GM12878 (cell line): ENCODE measurements at regions of chr20 and their contacts with region 1.

Region 1: DNA sequence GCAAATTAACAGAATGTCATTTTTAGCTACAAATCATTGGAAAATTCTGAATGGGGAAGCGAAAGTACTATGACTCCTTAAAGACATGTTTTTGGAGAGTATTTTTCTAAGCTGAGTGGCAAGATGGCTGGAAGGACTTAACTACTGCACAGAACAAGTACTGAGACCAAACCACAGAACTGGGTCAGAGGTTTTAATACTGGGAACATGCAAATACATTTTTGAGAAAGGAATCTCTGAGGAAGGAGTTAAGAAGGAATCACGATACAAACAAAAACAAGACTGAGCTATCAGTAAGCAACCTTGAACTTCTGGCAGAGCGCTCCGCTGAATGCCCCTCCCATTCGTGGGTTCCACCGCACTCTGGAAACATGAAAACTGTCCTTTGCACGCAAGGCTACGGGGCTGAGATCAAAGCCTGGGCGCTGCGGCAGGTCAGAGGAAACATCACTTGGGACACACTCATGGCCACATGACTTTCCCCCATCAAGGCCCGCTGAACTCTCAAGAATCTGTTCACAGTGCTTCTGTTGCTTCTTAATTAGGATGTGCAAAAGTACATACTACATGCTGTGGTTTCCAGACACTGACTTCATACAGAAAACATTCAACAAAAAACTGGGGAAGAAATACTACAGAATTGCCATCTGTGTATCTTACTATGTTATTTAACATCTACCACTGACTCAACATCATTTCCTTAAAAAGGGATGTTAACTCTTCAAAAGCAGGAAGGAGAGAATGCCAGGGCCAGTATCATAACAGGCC is 27.8 kb downstream of the SLC23A2 start:
- DNase-seq: peak; percentile 85
- ATAC-seq: peak; percentile 94
- H3K4me3 ChIP-seq: peak overlapping the region; percentile 42
- H3K27ac ChIP-seq: peak overlapping the region; percentile 76
- H3K4me1 ChIP-seq: peaks cover 4% of the 10 kb centered on the region
- H3K27me3 ChIP-seq: no peaks in the 10 kb centered on the region
- CTCF ChIP-seq: no peak
- EP300 ChIP-seq: peak; percentile 94 to 97
- POLR2A ChIP-seq: peak; percentile 45; the same call in 1 of the 2 replicates
- RAD21 ChIP-seq: 0 out of 2 replicates have a peak, but pooled peaks have one; percentile 12

Region 2: DNA sequence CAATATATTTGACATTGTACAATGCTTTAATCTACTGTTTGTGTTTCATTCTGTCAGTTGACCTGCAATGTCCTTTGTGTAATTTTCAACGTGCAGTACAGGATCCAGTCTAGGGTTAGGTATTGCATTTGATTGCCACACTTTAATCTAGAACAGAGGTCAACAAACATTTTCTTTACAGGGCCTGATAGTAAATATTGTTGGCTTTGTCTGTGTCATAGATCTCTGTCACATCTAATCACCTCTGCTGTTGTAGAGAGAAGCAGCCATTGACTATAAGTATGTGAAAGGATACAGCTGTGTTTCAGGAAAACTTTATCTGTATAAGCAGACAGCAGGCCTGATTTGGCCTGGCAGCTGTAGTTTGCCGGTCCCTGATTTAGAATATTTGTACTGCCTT is 1463.4 kb before region 1 on chr20:
- CTCF ChIA-PET with region 1: no interaction called
- POLR2A ChIA-PET with region 1: no interaction called
- RAD21 ChIA-PET with region 1: no interaction called
- SMC1A ChIA-PET with region 1: no interaction called
- in situ Hi-C with region 1: no loop called
- intact Hi-C with region 1: no loop called
- DNase-seq: no peak
- ATAC-seq: no peak
- H3K4me3 ChIP-seq: no peak overlapping the region
- H3K27ac ChIP-seq: no peak overlapping the region
- H3K4me1 ChIP-seq: no peaks in the 10 kb centered on the region
- H3K27me3 ChIP-seq: no peaks in the 10 kb centered on the region
- CTCF ChIP-seq: no peak
- EP300 ChIP-seq: no peak
- POLR2A ChIP-seq: no peak
- RAD21 ChIP-seq: no peak

Region 3: DNA sequence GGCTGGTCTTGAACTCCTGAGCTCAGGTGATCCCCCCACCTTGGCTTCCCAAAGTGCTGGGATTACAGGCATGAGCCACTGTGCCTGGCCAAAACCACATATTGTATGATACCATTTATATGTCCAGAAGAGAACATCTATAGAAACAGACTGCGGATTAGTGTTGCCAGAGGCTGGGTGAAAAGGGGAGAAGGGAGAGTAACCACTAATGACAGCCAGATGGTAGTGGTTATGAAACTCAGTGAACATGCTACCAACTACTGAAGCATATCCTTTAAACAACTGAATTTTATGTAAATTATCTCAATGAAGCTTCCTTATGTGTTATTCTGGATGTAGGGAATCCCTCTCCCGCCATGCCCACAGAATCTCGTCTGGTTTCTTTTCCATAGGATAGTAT is 12.1 kb after region 1 on chr20:
- CTCF ChIA-PET with region 1: interaction called, 6 read pairs
- POLR2A ChIA-PET with region 1: interaction called, 9 read pairs
- RAD21 ChIA-PET with region 1: interaction called, 22 read pairs
- SMC1A ChIA-PET with region 1: interaction called, 16 read pairs
- in situ Hi-C with region 1: no loop called
- intact Hi-C with region 1: loop called (anchors 2 kb)
- DNase-seq: peak; percentile 24
- ATAC-seq: peak; percentile 77
- H3K4me3 ChIP-seq: peak overlapping the region; percentile 13; the same call in 1 of the 2 replicates
- H3K27ac ChIP-seq: peak overlapping the region; percentile 11; the same call in 1 of the 2 replicates
- H3K4me1 ChIP-seq: peaks cover 25% of the 10 kb centered on the region
- H3K27me3 ChIP-seq: no peaks in the 10 kb centered on the region
- CTCF ChIP-seq: no peak
- EP300 ChIP-seq: no peak
- POLR2A ChIP-seq: no peak
- RAD21 ChIP-seq: no peak

Region 4: GRCh38 chr20:5001174-5002076 is 27.9 kb after region 1 on chr20 and contains the start of gene SLC23A2:
- CTCF ChIA-PET with region 1: interaction called, 5 read pairs
- POLR2A ChIA-PET with region 1: interaction called, 8 read pairs
- RAD21 ChIA-PET with region 1: interaction called, 10 read pairs
- SMC1A ChIA-PET with region 1: interaction called, 23 read pairs
- in situ Hi-C with region 1: no loop called
- intact Hi-C with region 1: no loop called
- DNase-seq: no peak
- ATAC-seq: peak; percentile 59
- H3K4me3 ChIP-seq: peak within 1 kb of the TSS; percentile 94
- H3K27ac ChIP-seq: no peak within 1 kb of the TSS
- H3K4me1 ChIP-seq: peaks cover 11% of the 10 kb centered on the region
- H3K27me3 ChIP-seq: no peaks in the 10 kb centered on the region; a peak in 1 of 4 replicates
- CTCF ChIP-seq: no peak
- EP300 ChIP-seq: no peak
- POLR2A ChIP-seq: peak; percentile 68
- RAD21 ChIP-seq: no peak
- polyA plus RNA-seq, gene SLC23A2: 4.4 to 5.9 TPM

Region 5: GRCh38 chr20:5041433-5041832 is 67.9 kb after region 1 on chr20:
- CTCF ChIA-PET with region 1: interaction called, 4 read pairs
- POLR2A ChIA-PET with region 1: interaction called, 9 read pairs
- RAD21 ChIA-PET with region 1: interaction called, 9 read pairs
- SMC1A ChIA-PET with region 1: interaction called, 18 read pairs
- in situ Hi-C with region 1: no loop called
- intact Hi-C with region 1: loop called (anchors 5 kb)
- DNase-seq: no peak
- ATAC-seq: no peak
- H3K4me3 ChIP-seq: no peak overlapping the region
- H3K27ac ChIP-seq: no peak overlapping the region
- H3K4me1 ChIP-seq: peaks cover 3% of the 10 kb centered on the region; the same call in 1 of the 2 replicates
- H3K27me3 ChIP-seq: no peaks in the 10 kb centered on the region; a peak in 1 of 4 replicates
- CTCF ChIP-seq: no peak
- EP300 ChIP-seq: no peak
- POLR2A ChIP-seq: no peak
- RAD21 ChIP-seq: no peak

Region 6: DNA sequence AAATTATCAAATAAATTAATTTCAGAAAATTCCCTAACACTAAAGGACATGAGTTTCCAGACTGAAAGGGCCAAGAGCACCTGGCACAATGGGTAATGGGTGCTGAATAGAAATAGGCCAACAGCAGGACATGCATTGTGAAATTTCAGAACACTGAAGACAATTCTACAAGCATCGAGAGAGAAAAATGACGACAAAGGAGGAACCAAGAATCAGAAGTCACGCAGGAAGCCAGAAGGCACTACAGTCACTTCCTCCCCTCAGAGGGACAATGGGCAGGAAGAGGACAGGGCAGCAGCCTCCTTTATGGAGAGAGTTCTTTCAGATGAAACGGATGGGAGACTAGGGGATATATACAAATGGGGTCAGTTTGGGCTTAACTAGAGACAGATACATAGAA is 116.7 kb after region 1 on chr20:
- CTCF ChIA-PET with region 1: interaction called, 3 read pairs
- POLR2A ChIA-PET with region 1: interaction called, 9 read pairs
- RAD21 ChIA-PET with region 1: no interaction called
- SMC1A ChIA-PET with region 1: interaction called, 11 read pairs
- in situ Hi-C with region 1: no loop called
- intact Hi-C with region 1: no loop called
- DNase-seq: no peak
- ATAC-seq: peak; percentile 93
- H3K4me3 ChIP-seq: no peak overlapping the region
- H3K27ac ChIP-seq: no peak overlapping the region
- H3K4me1 ChIP-seq: no peaks in the 10 kb centered on the region
- H3K27me3 ChIP-seq: no peaks in the 10 kb centered on the region
- CTCF ChIP-seq: no peak
- EP300 ChIP-seq: peak; percentile 64 to 72; a peak in 2 of 4 replicates
- POLR2A ChIP-seq: no peak
- RAD21 ChIP-seq: no peak